Transverse colon (tissue), 4 donors: ENCODE measurements at regions of chr1 and their contacts with region 1.

Region 1: GRCh38 chr1:248837794-248838356 is at the start of gene ZNF672:
- DNase-seq: peak; percentile 98
- H3K4me3 ChIP-seq: peak within 1 kb of the TSS; percentile 52 to 97 (median 82)
- H3K27ac ChIP-seq: peak within 1 kb of the TSS; percentile 95 to 100 (median 98)
- H3K4me1 ChIP-seq: peaks cover 14 to 31% (median 20%) of the 10 kb centered on the region in 4 donors
- H3K27me3 ChIP-seq: no peaks in the 10 kb centered on the region
- CTCF ChIP-seq: peak in 2 of 5 experiments; percentile 20 to 21
- EP300 ChIP-seq: no peak
- POLR2A ChIP-seq: peak; percentile 95
- total RNA-seq, gene ZNF672: 34.8 to 53.1 (median 44.7) TPM

Region 2: GRCh38 chr1:248858891-248859889 is 21.3 kb after region 1 on chr1 and contains the start of gene ZNF692:
- in situ Hi-C with region 1: no loop called
- intact Hi-C with region 1: loop called (anchors 2 kb)
- DNase-seq: peak; percentile 98
- H3K4me3 ChIP-seq: peak within 1 kb of the TSS; percentile 43 to 68 (median 52)
- H3K27ac ChIP-seq: peak within 1 kb of the TSS; percentile 89 to 94 (median 92)
- H3K4me1 ChIP-seq: peaks cover 14 to 37% (median 30%) of the 10 kb centered on the region in 4 donors
- H3K27me3 ChIP-seq: no peaks in the 10 kb centered on the region
- CTCF ChIP-seq: no peak
- EP300 ChIP-seq: no peak
- POLR2A ChIP-seq: peak; percentile 85
- total RNA-seq, gene ZNF692: 41.8 to 100 (median 64.6) TPM

Region 3: DNA sequence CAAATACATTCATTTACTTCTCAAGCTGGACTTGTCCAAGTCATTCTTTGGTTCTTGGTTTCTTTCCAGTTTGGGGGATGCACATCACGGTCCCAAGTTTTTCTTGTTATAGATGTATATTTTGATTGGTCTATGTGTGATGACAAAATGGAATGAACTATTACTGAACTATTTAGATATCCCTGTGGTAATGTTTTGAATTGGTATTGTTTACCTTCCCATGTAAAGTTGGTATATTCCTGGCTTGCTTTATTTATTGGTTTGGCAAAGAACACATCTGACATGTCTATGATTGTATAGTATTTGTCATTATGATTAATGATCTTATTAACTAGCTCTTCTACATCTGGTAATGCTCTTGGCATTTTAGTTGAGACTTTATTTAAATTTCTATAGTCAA is 43.4 kb after region 1 on chr1:
- in situ Hi-C with region 1: no loop called
- intact Hi-C with region 1: loop called (anchors 2 kb)
- DNase-seq: no peak
- H3K4me3 ChIP-seq: no peak overlapping the region
- H3K27ac ChIP-seq: no peak overlapping the region
- H3K4me1 ChIP-seq: no peaks in the 10 kb centered on the region
- H3K27me3 ChIP-seq: no peaks in the 10 kb centered on the region
- CTCF ChIP-seq: no peak
- EP300 ChIP-seq: no peak
- POLR2A ChIP-seq: no peak